Activated naive CD4-positive, alpha-beta T cell treated with anti-CD3 and anti-CD28 coated beads for 36 hours (primary cell): ENCODE measurements at regions of chr9 and their contacts with region 1.

Region 1: GRCh38 chr9:89602978-89603766 is 1.6 kb upstream of the GADD45G start:
- DNase-seq: peak; percentile 95
- H3K4me3 Mint-ChIP-seq: peak overlapping the region; percentile 84
- H3K27ac Mint-ChIP-seq: peak overlapping the region; percentile 50
- H3K4me1 Mint-ChIP-seq: peaks cover 34% of the 10 kb centered on the region
- H3K27me3 Mint-ChIP-seq: peaks cover 3% of the 10 kb centered on the region

Region 2: DNA sequence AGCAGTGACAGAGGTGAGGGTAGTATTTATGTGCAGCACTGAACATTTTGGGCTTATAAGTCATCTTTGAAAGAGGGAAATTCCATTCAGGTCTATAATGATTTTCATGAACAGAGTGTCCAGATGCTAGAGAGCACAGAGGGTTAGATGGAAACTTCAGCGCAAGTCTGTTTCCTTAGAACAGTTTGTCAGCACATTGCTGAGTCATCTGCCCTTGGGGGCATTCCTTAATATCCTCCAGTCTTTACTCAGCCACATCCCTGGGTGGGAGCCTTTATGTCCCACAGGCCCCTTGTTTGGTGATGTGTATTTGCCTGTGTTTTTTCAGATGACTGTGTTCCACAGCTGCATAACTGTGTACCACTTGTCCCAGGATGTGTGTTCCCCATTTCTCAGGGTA is 750.4 kb before region 1 on chr9:
- CTCF ChIA-PET with region 1: no interaction called
- intact Hi-C with region 1: no loop called
- DNase-seq: no peak
- H3K4me3 Mint-ChIP-seq: no peak overlapping the region
- H3K27ac Mint-ChIP-seq: no peak overlapping the region
- H3K4me1 Mint-ChIP-seq: no peaks in the 10 kb centered on the region
- H3K27me3 Mint-ChIP-seq: peaks cover 48% of the 10 kb centered on the region

Region 3: GRCh38 chr9:88949425-88949824 is 653.7 kb before region 1 on chr9:
- CTCF ChIA-PET with region 1: no interaction called
- intact Hi-C with region 1: no loop called
- DNase-seq: no peak
- H3K4me3 Mint-ChIP-seq: no peak overlapping the region
- H3K27ac Mint-ChIP-seq: no peak overlapping the region
- H3K4me1 Mint-ChIP-seq: peaks cover 6% of the 10 kb centered on the region
- H3K27me3 Mint-ChIP-seq: peaks cover 13% of the 10 kb centered on the region

Region 4: GRCh38 chr9:89234205-89235067 is 368.7 kb before region 1 on chr9:
- CTCF ChIA-PET with region 1: no interaction called
- intact Hi-C with region 1: no loop called
- DNase-seq: peak; percentile 41
- H3K4me3 Mint-ChIP-seq: no peak overlapping the region
- H3K27ac Mint-ChIP-seq: no peak overlapping the region
- H3K4me1 Mint-ChIP-seq: peaks cover 17% of the 10 kb centered on the region
- H3K27me3 Mint-ChIP-seq: peaks cover 42% of the 10 kb centered on the region

Region 5: DNA sequence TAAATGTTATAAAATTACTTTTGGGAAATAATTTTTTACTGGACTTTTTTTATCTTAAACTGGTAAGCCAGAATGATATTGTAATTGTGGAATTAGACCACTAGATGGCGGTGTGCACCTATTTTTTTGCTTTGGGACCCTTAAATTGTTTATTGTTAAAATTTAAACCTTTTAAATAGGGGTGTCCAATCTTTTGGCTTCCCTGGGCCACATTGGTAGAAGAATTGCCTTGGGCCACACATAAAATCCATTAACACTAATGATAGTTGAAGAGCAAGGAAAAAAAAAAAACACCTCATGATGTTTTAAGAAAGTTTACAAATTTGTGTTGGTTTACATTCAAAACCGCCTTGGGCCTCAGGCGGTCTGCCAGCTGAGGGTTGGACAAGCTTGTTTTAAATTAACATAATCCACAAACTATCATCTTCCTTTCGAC is 26.8 kb before region 1 on chr9:
- CTCF ChIA-PET with region 1: interaction called, 15 read pairs
- intact Hi-C with region 1: loop called (anchors 2 kb)
- DNase-seq: peak; percentile 35
- H3K4me3 Mint-ChIP-seq: no peak overlapping the region
- H3K27ac Mint-ChIP-seq: no peak overlapping the region
- H3K4me1 Mint-ChIP-seq: peaks cover 6% of the 10 kb centered on the region
- H3K27me3 Mint-ChIP-seq: peaks cover 20% of the 10 kb centered on the region

Region 6: GRCh38 chr9:89802781-89803355 is 199.7 kb after region 1 on chr9:
- CTCF ChIA-PET with region 1: interaction called, 3 read pairs
- intact Hi-C with region 1: loop called (anchors 5 kb)
- DNase-seq: no peak
- H3K4me3 Mint-ChIP-seq: no peak overlapping the region
- H3K27ac Mint-ChIP-seq: no peak overlapping the region
- H3K4me1 Mint-ChIP-seq: peaks cover 6% of the 10 kb centered on the region
- H3K27me3 Mint-ChIP-seq: no peaks in the 10 kb centered on the region

Region 7: DNA sequence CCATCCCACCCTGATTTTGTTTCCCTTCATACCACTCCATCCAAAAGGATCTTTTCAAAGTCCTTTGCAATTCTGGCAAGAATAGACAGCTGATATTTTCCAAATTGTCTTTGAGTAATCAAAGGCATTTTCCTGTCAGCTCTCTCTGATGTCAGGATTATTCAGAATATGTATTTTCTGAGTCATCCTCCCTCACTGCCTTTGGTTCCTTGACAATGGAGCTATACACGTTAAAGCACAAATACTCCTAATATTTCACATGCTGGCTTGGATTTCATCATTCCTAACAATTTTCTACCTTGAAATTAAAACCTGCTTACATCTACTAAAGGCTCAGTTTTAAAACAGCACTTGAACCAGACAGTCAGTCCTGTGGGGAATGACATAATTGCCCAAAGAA is 381.0 kb after region 1 on chr9:
- CTCF ChIA-PET with region 1: interaction called, 3 read pairs
- intact Hi-C with region 1: loop called (anchors 1 kb)
- DNase-seq: no peak
- H3K4me3 Mint-ChIP-seq: peak overlapping the region; percentile 33
- H3K27ac Mint-ChIP-seq: peak overlapping the region; percentile 88
- H3K4me1 Mint-ChIP-seq: peaks cover 49% of the 10 kb centered on the region
- H3K27me3 Mint-ChIP-seq: peaks cover 17% of the 10 kb centered on the region

Region 8: DNA sequence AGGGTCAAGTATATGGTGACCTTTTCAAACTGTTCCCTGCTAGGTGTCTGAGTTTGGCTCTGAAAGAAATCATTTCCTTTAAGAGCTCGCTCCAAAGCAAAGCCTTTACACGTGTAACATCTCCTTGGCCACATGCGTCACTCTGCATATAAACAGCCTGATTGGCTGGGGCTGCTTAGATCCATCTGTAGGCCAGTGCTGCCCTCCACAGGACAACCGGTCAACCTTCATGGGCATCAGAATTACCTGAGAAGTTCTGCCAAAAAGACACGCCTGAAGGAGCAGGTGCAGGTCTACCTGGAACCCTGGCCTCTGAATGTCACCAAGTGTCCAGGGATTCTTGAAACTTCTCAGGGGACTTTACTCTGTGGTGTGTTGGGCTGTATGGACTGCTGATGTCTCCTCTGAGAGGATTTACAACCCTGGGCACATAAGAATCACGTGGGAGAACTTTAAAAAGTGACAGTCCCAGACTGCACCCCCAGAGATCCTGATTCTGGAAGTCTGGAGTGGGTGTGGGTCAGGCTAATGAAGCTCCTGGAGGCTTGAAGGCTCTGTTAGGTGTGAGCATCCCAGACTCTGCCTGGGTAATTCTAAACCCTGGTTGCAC is 499.2 kb after region 1 on chr9:
- CTCF ChIA-PET with region 1: interaction called, 110 read pairs
- intact Hi-C with region 1: loop called (anchors 1 kb)
- DNase-seq: peak; percentile 91
- H3K4me3 Mint-ChIP-seq: no peak overlapping the region
- H3K27ac Mint-ChIP-seq: no peak overlapping the region
- H3K4me1 Mint-ChIP-seq: peaks cover 3% of the 10 kb centered on the region
- H3K27me3 Mint-ChIP-seq: peaks cover 2% of the 10 kb centered on the region